IMR-90 (cell line): ENCODE measurements at regions of chr9 and their contacts with region 1.

Region 1: DNA sequence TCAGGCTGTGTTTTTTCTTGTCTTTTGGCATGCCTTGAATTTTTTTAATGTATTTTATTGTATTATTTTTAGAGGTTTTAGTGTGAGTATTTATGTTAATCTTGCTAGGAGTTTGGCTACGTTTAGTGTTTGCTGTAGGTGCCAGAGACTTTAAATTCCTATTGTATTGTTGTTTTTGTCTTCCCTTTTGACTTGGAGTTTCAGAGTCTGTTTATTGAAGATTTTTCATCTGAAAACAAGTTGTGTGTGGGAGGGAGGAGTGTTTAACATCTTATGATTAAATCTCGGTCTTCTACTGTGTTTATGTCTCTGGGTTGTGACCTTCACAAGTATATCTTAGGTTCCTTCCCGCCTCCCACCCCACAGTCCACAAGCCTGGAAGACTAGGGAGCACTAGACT is 956.8 kb downstream of the TLE1 start:
- DNase-seq: peak; percentile 1
- ATAC-seq: no peak; the same call in 1 of the 2 replicates
- H3K4me3 ChIP-seq: no peak overlapping the region
- H3K27ac ChIP-seq: no peak overlapping the region
- H3K4me1 ChIP-seq: no peaks in the 10 kb centered on the region
- H3K27me3 ChIP-seq: no peaks in the 10 kb centered on the region
- CTCF ChIP-seq: no peak
- POLR2A ChIP-seq: no peak
- RAD21 ChIP-seq: no peak

Region 2: GRCh38 chr9:80679916-80680315 is 52.6 kb before region 1 on chr9:
- CTCF ChIA-PET with region 1: no interaction called
- POLR2A ChIA-PET with region 1: no interaction called
- dilution Hi-C with region 1: no loop called
- in situ Hi-C with region 1: no loop called
- intact Hi-C with region 1: loop called (anchors 2 kb)
- DNase-seq: no peak
- ATAC-seq: no peak
- H3K4me3 ChIP-seq: no peak overlapping the region
- H3K27ac ChIP-seq: no peak overlapping the region
- H3K4me1 ChIP-seq: no peaks in the 10 kb centered on the region
- H3K27me3 ChIP-seq: no peaks in the 10 kb centered on the region
- CTCF ChIP-seq: no peak
- POLR2A ChIP-seq: no peak
- RAD21 ChIP-seq: no peak

Region 3: DNA sequence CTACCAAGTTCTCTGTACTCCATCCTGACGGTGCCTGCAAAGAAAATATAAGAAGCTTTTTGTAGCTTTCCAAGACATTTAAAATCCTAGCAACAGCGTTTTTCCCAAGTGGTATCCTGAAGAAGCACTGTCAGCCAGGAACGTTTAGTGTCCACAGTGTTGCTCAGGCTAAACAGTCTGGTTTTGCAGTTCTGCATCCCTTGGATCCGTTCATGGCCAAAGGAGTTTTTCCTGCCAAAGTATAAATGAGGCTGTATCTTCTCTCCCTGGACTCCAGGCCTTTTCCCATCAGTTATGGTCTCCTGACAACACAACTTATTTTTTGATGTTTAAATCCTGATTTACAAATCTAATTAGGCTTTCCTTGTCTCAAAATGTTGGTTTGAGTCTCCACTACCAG is 31.0 kb after region 1 on chr9:
- CTCF ChIA-PET with region 1: no interaction called
- POLR2A ChIA-PET with region 1: no interaction called
- dilution Hi-C with region 1: no loop called
- in situ Hi-C with region 1: no loop called
- intact Hi-C with region 1: no loop called
- DNase-seq: no peak
- ATAC-seq: no peak
- H3K4me3 ChIP-seq: no peak overlapping the region
- H3K27ac ChIP-seq: no peak overlapping the region
- H3K4me1 ChIP-seq: no peaks in the 10 kb centered on the region
- H3K27me3 ChIP-seq: no peaks in the 10 kb centered on the region
- CTCF ChIP-seq: no peak
- POLR2A ChIP-seq: no peak
- RAD21 ChIP-seq: no peak